ENCODE measurements at regions of chr9 and their contacts with region 1.

Region 1: GRCh38 chr9:87944096-87944495 is 26.3 kb downstream of the SPATA31C1 start:
- DNase-seq: no peak
- H3K4me3 ChIP-seq: no peak overlapping the region
- H3K27ac ChIP-seq: no peak overlapping the region
- H3K4me1 ChIP-seq: peaks cover 6% of the 10 kb centered on the region
- H3K27me3 ChIP-seq: no peaks in the 10 kb centered on the region
- CTCF ChIP-seq: no peak

Region 2: DNA sequence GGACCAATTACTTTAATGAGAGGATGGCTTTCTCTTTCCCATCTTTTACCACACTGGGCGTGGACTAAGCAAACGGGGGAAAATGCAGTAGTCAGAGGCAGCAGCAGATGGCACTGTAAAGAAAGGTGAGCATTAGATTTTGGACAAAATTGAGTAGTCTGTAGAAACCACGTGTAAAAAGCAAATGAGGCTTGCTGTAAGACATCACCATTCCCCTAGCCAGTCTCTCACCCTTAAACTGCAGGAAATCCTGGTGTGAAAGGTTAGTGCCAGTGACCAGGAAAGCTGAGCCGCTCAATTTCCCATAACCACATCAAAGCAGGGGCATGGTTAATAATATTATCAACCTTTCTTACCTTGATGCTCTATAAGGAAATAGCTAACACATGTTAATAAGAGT is 162.4 kb after region 1 on chr9:
- CTCF ChIA-PET with region 1: no interaction called
- POLR2A ChIA-PET with region 1: no interaction called
- intact Hi-C with region 1: loop called (anchors 5 kb)
- DNase-seq: peak; percentile 74
- H3K4me3 ChIP-seq: no peak overlapping the region
- H3K27ac ChIP-seq: no peak overlapping the region
- H3K4me1 ChIP-seq: no peaks in the 10 kb centered on the region
- H3K27me3 ChIP-seq: no peaks in the 10 kb centered on the region
- CTCF ChIP-seq: peak; percentile 72

Region 3: DNA sequence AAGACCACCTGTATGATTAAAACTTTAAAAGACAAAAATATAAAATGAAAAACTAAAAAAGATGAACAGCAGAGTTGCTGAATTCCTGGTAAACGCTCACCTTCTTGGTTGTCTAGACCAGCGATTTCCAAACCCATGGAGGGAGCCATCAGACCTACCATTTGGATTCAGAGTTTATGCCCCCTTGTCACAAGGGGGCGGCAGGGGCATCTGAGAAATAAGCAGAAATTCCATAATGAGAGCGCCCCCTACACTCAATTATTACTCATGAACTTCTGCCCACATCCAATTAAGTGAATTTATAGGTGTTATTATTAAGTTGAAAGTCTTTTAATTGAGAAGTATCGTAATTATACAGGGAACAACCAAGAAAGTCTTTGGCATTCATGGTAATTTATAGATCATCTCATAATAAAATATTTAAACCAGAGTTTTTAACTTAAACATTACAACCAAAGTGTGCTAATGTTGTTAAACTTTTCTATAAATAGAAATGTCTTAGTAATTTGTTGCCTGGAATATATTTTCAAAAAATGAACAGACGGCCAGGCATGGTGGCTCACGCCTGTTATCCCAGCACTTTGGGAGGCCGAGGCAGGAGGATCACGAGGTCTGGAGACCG is 229.4 kb after region 1 on chr9:
- CTCF ChIA-PET with region 1: no interaction called
- POLR2A ChIA-PET with region 1: no interaction called
- intact Hi-C with region 1: no loop called
- DNase-seq: peak; percentile 86
- H3K4me3 ChIP-seq: no peak overlapping the region
- H3K27ac ChIP-seq: no peak overlapping the region
- H3K4me1 ChIP-seq: peaks cover 12% of the 10 kb centered on the region
- H3K27me3 ChIP-seq: no peaks in the 10 kb centered on the region
- CTCF ChIP-seq: peak; percentile 85

Measured in A673 (cell line).